ENCODE measurements at regions of chr20 and their contacts with region 1.

Region 1: DNA sequence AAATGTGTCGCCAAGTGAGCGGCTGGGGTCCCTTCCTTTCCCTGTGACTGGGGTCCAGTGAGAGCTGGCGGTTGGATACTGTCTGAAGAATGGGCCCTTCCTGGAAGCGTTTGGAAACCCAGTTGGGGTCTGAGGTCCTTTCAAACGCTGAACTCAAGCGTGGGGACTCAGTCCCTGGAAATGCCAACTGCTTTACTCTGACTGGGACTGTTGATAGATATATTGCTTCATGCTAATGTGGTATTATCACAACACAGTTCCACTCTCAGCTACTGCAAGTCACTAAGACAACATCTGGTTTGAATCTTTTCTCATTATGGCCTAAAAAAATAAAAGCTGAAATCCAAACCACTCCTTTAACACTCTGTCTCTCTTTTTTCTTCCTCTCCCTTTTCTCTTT is 23.7 kb upstream of the PSMF1 start:
- DNase-seq: no peak
- ATAC-seq: no peak
- H3K4me3 ChIP-seq: no peak overlapping the region
- H3K27ac ChIP-seq: no peak overlapping the region
- H3K4me1 ChIP-seq: no peaks in the 10 kb centered on the region
- H3K27me3 ChIP-seq: no peaks in the 10 kb centered on the region
- CTCF ChIP-seq: no peak

Region 2: GRCh38 chr20:787825-788224 is 306.9 kb before region 1 on chr20:
- intact Hi-C with region 1: loop called in 1 of 2 experiments (anchors 10 kb)
- DNase-seq: no peak
- ATAC-seq: no peak
- H3K4me3 ChIP-seq: no peak overlapping the region
- H3K27ac ChIP-seq: no peak overlapping the region
- H3K4me1 ChIP-seq: no peaks in the 10 kb centered on the region
- H3K27me3 ChIP-seq: peaks cover 0 to 4% (median 0%) of the 10 kb centered on the region in 3 donors
- CTCF ChIP-seq: no peak

Region 3: GRCh38 chr20:1469925-1470571 is 375.3 kb after region 1 on chr20:
- intact Hi-C with region 1: no loop called
- DNase-seq: peak; percentile 77
- ATAC-seq: peak in 3 of 4 donors; percentile 22 to 47 (median 22)
- H3K4me3 ChIP-seq: no peak overlapping the region
- H3K27ac ChIP-seq: no peak overlapping the region
- H3K4me1 ChIP-seq: peaks cover 8% of the 10 kb centered on the region
- H3K27me3 ChIP-seq: no peaks in the 10 kb centered on the region
- CTCF ChIP-seq: peak; percentile 66

Measured in psoas muscle (tissue), 8 donors.